Activated T-helper 1 cell treated with anti-CD3 and anti-CD28 coated beads, Interleukin-12 subunit alpha, Interleukin-12 subunit beta, Interleukin-2, Interleukin-4 antibody, amounts not matched to agents 30 ng/mL and 10 ng/mL and 1 ng/mL, durations not matched to agents 14 hours and 24 hours and 36 hours (primary cell): ENCODE measurements at regions of chr1 and their contacts with region 1.

Region 1: DNA sequence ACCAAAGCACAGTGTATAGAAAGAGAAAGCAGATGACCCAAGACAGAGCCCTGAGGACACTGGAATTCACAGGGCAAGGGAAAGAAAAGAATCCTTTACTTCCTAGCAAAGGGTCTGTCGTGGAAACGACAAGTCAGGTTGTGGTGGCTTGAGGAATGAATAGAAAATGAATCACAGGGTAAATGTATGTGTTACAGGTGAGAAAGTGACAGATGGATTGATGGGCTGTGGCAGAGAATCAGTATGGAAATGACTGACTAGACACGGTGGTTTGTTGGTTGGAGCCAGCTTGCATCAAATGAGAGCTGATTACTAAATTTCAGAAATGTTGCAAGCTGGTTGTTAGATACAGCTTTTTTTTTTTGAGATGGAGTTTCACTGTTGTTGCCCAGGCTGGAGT is 46.9 kb downstream of the PTP4A2 start:
- DNase-seq: peak; percentile 34
- H3K4me3 Mint-ChIP-seq: peak overlapping the region; percentile 29
- H3K27ac Mint-ChIP-seq: peak overlapping the region; percentile 54
- H3K4me1 Mint-ChIP-seq: peaks cover 38% of the 10 kb centered on the region
- H3K27me3 Mint-ChIP-seq: no peaks in the 10 kb centered on the region

Region 2: GRCh38 chr1:31762726-31763670 is 128.3 kb before region 1 on chr1:
- intact Hi-C with region 1: loop called (anchors 5 kb)
- DNase-seq: peak; percentile 42
- H3K4me3 Mint-ChIP-seq: peak overlapping the region; percentile 65
- H3K27ac Mint-ChIP-seq: no peak overlapping the region
- H3K4me1 Mint-ChIP-seq: peaks cover 25% of the 10 kb centered on the region
- H3K27me3 Mint-ChIP-seq: peaks cover 60% of the 10 kb centered on the region

Region 3: DNA sequence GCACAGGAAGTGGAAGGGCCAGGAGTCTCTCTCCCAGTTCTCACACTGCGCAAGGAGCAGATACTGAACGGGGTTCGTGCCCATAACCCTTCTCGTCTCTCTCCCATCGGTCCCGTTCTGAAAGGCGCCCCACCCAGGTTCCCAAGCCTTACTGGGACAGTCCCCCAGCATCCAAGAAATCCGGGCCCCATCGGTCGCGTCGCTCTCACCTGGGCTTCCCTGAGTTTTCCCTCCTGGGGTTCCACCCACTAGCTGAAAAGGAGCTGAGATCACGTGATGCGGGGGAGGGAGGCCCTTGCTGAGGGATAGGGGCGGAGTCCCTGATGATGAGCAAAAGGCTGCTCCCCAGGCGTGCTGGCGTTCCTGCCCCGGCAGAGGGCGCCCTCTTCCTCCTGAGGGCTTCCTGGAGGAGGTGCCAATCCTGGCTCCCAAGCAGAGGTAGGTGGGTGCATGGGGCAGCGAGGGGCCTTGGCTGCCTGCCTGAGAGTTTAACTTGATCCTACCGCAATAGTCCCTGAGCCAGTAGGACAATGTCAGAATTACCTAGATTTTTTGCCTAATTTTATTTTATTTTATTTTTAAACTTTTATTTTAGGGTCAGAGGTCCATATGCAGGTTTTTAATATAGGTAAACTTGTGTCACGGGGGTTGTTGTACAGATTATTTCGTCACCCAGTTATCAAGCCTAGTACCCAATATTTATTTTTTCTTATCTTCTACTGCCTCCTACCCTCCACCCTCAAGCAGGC is 75.4 kb before region 1 on chr1 and contains the start of gene SPOCD1:
- intact Hi-C with region 1: loop called (anchors 5 kb)
- DNase-seq: peak; percentile 74
- H3K4me3 Mint-ChIP-seq: no peak within 1 kb of the TSS
- H3K27ac Mint-ChIP-seq: no peak within 1 kb of the TSS
- H3K4me1 Mint-ChIP-seq: peaks cover 10% of the 10 kb centered on the region
- H3K27me3 Mint-ChIP-seq: peaks cover 6% of the 10 kb centered on the region
- total RNA-seq, gene SPOCD1: not detected in 2 replicates

Region 4: GRCh38 chr1:31855038-31855845 is 36.0 kb before region 1 on chr1:
- intact Hi-C with region 1: loop called (anchors 1 kb)
- DNase-seq: no peak
- H3K4me3 Mint-ChIP-seq: no peak overlapping the region
- H3K27ac Mint-ChIP-seq: no peak overlapping the region
- H3K4me1 Mint-ChIP-seq: no peaks in the 10 kb centered on the region
- H3K27me3 Mint-ChIP-seq: peaks cover 2% of the 10 kb centered on the region

Region 5: DNA sequence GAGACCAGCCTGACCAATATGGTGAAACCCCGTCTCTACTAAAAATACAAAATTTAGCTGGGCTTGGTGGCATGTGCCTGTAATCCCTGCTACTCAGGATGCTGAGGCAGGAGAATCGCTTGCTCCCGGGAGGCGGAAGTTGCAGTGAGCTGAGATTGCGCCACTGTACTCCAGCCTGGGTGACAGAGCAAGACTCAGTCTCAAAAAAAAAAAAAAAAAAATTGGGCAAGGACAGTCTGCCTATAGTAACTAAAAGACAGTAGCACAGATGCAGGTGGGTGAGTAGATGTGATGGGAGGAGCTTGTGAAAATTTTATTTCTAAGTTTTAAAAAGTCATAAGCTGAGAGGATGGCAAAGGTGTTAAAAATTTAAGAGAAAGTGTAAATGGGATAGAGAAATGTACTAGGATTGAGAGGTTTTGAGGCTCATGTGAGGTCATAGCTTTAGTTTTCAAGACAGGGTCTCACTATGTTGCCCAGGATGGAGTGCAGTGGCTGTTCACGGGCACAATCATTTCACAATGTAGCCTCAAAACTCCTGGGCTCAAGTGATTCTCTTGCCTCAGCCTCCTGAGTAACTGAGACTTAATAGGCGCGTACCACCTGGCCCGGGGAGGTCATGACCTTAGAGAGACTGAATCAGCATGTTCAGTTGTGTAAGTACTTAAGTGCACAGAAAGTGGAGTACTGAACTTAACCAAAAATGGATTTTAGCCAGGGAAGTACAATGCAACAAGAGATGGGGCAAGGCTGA is 13.2 kb after region 1 on chr1:
- intact Hi-C with region 1: loop called (anchors 1 kb)
- DNase-seq: no peak
- H3K4me3 Mint-ChIP-seq: no peak overlapping the region
- H3K27ac Mint-ChIP-seq: peak overlapping the region; percentile 10
- H3K4me1 Mint-ChIP-seq: peaks cover 10% of the 10 kb centered on the region
- H3K27me3 Mint-ChIP-seq: no peaks in the 10 kb centered on the region

Region 6: GRCh38 chr1:31920956-31921355 is 29.7 kb after region 1 on chr1:
- intact Hi-C with region 1: no loop called
- DNase-seq: no peak
- H3K4me3 Mint-ChIP-seq: peak overlapping the region; percentile 11
- H3K27ac Mint-ChIP-seq: peak overlapping the region; percentile 60
- H3K4me1 Mint-ChIP-seq: peaks cover 69% of the 10 kb centered on the region
- H3K27me3 Mint-ChIP-seq: no peaks in the 10 kb centered on the region

Region 7: DNA sequence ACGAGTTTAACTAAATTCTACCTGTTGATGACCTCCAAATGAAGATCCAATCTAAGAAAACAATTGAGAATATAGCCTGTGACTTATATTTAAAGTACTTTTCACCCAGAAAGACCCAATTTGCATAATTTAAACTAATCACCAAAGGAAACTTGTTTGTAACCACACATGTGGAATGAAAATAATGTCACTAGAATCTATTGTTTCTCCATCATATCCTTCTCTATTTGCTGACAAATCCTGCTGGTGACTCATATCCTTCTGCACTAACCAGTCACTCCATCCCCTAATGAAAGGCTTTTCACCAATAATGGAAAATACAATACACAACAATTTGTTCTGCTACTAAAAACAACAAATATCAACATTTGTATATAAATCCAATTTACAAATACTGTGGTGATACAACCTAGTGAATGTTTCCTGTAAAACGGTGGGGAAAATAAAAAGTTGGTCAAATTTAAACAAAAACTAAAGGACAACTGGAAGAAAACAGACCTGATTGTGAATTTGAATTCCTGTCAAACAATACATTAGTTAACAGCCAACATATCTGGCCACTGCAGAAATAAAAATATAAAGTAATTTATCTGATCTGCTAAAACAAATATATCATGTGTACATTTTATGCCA is 40.4 kb after region 1 on chr1:
- intact Hi-C with region 1: loop called (anchors 1 kb)
- DNase-seq: no peak
- H3K4me3 Mint-ChIP-seq: peak overlapping the region; percentile 83
- H3K27ac Mint-ChIP-seq: peak overlapping the region; percentile 94
- H3K4me1 Mint-ChIP-seq: peaks cover 97% of the 10 kb centered on the region
- H3K27me3 Mint-ChIP-seq: no peaks in the 10 kb centered on the region

Region 8: DNA sequence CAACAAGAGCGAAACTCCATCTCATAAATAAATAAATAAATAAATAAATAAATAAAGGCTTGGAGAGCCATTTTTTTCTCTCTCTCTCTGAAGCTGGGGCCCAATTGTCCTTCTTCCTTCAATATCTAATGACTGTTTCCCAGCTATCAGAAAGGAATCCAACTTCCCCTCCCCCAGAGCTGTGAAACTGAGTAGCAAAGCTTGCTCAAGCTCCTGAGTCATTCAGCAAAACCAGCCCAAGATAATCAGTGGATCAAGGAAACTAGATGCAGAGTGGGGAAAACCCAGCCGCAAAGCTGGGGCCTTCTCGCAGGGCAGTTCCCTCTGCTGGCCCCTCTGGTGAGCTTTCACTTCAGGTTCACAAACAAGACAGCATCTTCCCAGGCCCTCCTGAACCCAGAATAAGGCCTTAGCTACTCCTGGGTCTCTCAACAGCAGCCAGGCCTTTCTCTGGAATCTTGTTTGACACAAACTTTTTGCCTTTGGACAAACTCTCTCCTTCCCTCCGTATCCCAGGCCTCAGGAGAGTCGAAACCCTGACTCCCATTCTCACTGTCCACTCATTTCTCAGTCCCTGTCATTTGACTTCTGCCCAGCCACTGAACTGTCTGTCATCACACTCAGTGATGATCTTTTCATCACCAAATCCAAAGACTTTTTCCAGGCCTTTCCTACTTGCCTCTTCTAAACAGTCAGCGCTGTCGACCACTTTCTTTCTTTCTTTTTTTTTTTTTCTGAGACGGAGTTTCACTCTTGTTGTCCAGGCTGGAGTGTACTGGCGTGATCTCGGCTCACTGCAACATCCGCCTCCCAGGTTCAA is 64.8 kb after region 1 on chr1:
- intact Hi-C with region 1: loop called (anchors 1 kb)
- DNase-seq: peak; percentile 84
- H3K4me3 Mint-ChIP-seq: peak overlapping the region; percentile 59
- H3K27ac Mint-ChIP-seq: peak overlapping the region; percentile 83
- H3K4me1 Mint-ChIP-seq: peaks cover 78% of the 10 kb centered on the region
- H3K27me3 Mint-ChIP-seq: no peaks in the 10 kb centered on the region